ENCODE measurements at regions of chr10 and their contacts with region 1.

Region 1: GRCh38 chr10:114103284-114103683 is 59.6 kb downstream of the ADRB1 start:
- DNase-seq: no peak
- ATAC-seq: no peak
- H3K4me3 Mint-ChIP-seq: no peak overlapping the region
- H3K27ac Mint-ChIP-seq: no peak overlapping the region
- H3K4me1 Mint-ChIP-seq: peaks cover 41% of the 10 kb centered on the region
- H3K27me3 Mint-ChIP-seq: peaks cover 15% of the 10 kb centered on the region
- CTCF ChIP-seq: no peak

Region 2: DNA sequence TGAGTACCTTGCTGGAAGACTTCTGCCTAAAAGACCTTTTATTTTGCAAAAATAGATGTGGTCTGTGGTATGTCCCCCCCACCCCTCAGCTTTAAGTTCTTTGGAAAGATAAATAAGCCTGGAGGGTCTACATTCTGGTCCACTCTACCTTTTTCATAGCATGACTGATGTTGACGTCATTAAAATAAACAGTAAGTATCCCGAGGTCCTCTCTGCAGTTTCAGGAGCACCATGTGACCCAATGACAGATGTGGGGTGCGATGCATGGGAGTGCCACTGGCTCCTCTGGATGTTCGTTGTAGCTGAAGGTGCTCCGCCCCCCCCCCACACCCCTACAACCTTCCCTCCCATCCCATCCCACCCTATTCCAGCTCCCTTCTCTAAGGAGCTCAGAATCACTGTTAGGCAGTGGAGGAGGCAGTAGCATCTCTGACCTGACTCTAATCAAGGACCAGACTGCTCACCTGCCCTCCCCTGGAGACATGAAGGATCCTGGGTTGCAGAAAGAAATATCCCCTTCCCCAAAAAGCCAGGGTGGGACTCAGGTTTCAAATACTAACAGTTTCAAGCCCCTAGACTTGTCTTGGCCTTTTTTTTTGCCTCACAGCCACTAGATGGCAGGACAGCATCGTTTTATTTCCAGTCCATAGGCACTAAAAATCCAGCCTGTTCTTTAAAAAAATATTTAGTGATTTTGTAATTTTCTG is 398.5 kb before region 1 on chr10:
- CTCF ChIA-PET with region 1: interaction called, 3 read pairs
- POLR2A ChIA-PET with region 1: no interaction called
- intact Hi-C with region 1: loop called (anchors 1 kb)
- DNase-seq: no peak
- ATAC-seq: no peak
- H3K4me3 Mint-ChIP-seq: no peak overlapping the region
- H3K27ac Mint-ChIP-seq: no peak overlapping the region
- H3K4me1 Mint-ChIP-seq: peaks cover 13% of the 10 kb centered on the region
- H3K27me3 Mint-ChIP-seq: no peaks in the 10 kb centered on the region
- CTCF ChIP-seq: no peak

Region 3: DNA sequence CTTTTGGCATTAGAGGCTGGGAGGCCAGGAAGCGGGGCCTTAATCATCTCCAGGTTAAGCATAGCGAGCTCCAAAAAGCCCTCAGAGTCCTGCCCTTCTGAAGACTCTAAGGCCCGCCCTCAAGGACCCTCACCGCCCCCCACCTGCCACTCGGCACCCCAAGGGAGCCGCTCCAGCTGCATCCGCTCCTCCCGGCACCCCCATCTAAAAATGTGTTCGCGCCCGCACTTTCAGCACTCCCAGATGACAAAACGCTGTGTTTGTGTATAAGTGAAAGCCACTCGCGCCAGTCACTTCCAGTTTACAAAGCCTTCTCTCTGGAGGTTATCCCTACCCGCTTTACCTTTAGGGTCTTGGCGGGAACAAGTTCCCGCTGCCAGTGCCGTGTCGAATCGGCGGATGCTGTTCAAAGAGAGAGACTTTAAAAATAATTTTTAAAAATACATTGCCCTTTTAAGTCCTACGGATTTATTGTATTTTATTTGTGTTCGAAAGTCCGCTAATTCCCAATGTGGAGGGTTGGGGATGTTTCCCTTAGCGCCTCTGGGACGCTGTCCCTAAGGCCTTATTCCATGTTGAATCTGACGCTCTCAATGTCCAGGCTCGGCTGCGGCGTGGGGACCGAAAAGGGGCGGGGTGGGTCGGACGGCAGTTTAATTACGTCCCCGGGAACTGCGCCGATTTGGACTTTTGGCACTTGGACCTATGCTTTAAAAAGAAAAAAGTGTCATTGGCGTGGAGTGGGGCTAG is 249.1 kb before region 1 on chr10 and contains the starts of genes DCLRE1A and NHLRC2:
- CTCF ChIA-PET with region 1: no interaction called
- POLR2A ChIA-PET with region 1: no interaction called
- intact Hi-C with region 1: loop called (anchors 5 kb)
- DNase-seq: peak; percentile 62
- ATAC-seq: peak; percentile 68
- H3K4me3 Mint-ChIP-seq: peak within 1 kb of the TSS; percentile 98
- H3K27ac Mint-ChIP-seq: peak within 1 kb of the TSS; percentile 99
- H3K4me1 Mint-ChIP-seq: peaks cover 51% of the 10 kb centered on the region
- H3K27me3 Mint-ChIP-seq: no peaks in the 10 kb centered on the region
- CTCF ChIP-seq: no peak
- total RNA-seq, gene DCLRE1A: 4.5 and 4.9 TPM in 2 replicates
- total RNA-seq, gene NHLRC2: 40.3 and 43.9 TPM in 2 replicates

Region 4: GRCh38 chr10:113905756-113906155 is 197.5 kb before region 1 on chr10:
- CTCF ChIA-PET with region 1: interaction called, 4 read pairs
- POLR2A ChIA-PET with region 1: no interaction called
- intact Hi-C with region 1: loop called (anchors 2 kb)
- DNase-seq: no peak
- ATAC-seq: no peak
- H3K4me3 Mint-ChIP-seq: no peak overlapping the region
- H3K27ac Mint-ChIP-seq: no peak overlapping the region
- H3K4me1 Mint-ChIP-seq: no peaks in the 10 kb centered on the region
- H3K27me3 Mint-ChIP-seq: no peaks in the 10 kb centered on the region
- CTCF ChIP-seq: no peak

Region 5: GRCh38 chr10:114024876-114025610 is 78.2 kb before region 1 on chr10:
- CTCF ChIA-PET with region 1: no interaction called
- POLR2A ChIA-PET with region 1: interaction called, 6 read pairs
- intact Hi-C with region 1: loop called (anchors 2 kb)
- DNase-seq: peak; percentile 25
- ATAC-seq: peak; percentile 80
- H3K4me3 Mint-ChIP-seq: peak overlapping the region; percentile 71
- H3K27ac Mint-ChIP-seq: peak overlapping the region; percentile 82
- H3K4me1 Mint-ChIP-seq: peaks cover 33% of the 10 kb centered on the region
- H3K27me3 Mint-ChIP-seq: peaks cover 5% of the 10 kb centered on the region
- CTCF ChIP-seq: no peak

Region 6: GRCh38 chr10:114083040-114083439 is 20.2 kb before region 1 on chr10:
- CTCF ChIA-PET with region 1: no interaction called
- POLR2A ChIA-PET with region 1: no interaction called
- intact Hi-C with region 1: no loop called
- DNase-seq: no peak
- ATAC-seq: no peak
- H3K4me3 Mint-ChIP-seq: no peak overlapping the region
- H3K27ac Mint-ChIP-seq: no peak overlapping the region
- H3K4me1 Mint-ChIP-seq: no peaks in the 10 kb centered on the region
- H3K27me3 Mint-ChIP-seq: no peaks in the 10 kb centered on the region
- CTCF ChIP-seq: no peak

Measured in activated B cell treated with CpG ODN at 0.5 μM for 24 hours (primary cell).